Heart right ventricle (tissue), 16 donors: ENCODE measurements at regions of chr10 and their contacts with region 1.

Region 1: GRCh38 chr10:102583435-102584417 is 60.6 kb upstream of the TRIM8 start:
- DNase-seq: peak; percentile 79 to 86
- ATAC-seq: peak; percentile 86 to 94 (median 91)
- H3K4me3 ChIP-seq: no peak overlapping the region
- H3K27ac ChIP-seq: no peak overlapping the region
- H3K4me1 ChIP-seq: peaks cover 0 to 42% (median 23%) of the 10 kb centered on the region in 9 donors
- H3K27me3 ChIP-seq: no peaks in the 10 kb centered on the region
- CTCF ChIP-seq: peak; percentile 70 to 92 (median 85)

Region 2: DNA sequence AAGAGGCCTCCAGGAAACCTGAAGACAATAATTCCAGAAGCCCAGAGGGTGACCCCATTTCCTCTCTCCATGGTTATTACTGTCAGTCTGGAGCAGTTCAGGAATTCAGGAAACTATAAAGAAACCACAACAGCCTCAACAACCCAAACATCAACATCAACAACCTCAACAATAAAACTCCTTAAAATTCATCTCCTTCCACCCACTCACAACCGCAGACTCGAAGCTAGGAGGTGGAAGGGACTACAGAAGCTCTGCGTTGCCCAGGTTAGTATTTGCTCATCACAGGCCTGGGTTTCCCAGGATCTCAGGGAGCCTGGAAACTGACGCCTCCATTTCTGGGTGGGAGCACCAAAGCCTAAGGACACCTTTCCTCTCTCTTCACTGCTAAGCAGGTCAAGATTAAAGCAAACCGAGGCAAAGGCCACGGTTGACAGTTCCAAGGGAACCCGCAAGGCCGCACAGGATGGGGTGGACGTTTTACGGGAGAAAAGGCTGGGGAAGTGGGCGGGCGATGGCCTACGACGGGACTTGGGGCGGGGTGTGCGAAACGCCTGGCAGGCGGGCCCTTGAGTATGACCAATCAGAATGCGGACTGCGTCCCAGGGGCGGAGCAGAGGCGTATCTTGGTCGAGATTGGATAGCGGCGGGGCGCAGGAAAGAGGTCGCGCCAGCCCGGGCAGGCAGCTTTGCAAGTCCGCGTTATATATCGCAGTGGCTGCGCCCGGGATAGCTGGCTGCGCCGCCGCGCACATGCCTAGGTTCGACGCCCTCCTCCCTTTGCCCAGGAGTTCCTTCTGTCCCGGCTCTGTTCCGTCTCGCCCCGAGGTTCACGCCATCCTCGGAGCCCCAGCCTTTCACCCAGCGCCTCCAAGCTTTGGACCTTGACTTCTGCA is 357.8 kb before region 1 on chr10 and contains the start of gene ELOVL3:
- intact Hi-C with region 1: loop called in 1 of 10 experiments (anchors 10 kb)
- DNase-seq: peak; percentile 93 to 96
- ATAC-seq: peak; percentile 93 to 98 (median 98)
- H3K4me3 ChIP-seq: peak within 1 kb of the TSS in 7 of 10 donors; percentile 18 to 49 (median 45)
- H3K27ac ChIP-seq: peak within 1 kb of the TSS; percentile 19 to 89 (median 74)
- H3K4me1 ChIP-seq: peaks cover 6 to 44% (median 23%) of the 10 kb centered on the region in 9 donors
- H3K27me3 ChIP-seq: peaks cover 0 to 27% (median 10%) of the 10 kb centered on the region in 7 donors
- CTCF ChIP-seq: peak in 3 of 9 donors; percentile 1 to 10 (median 5)
- total RNA-seq, gene ELOVL3: 0.22 to 0.45 (median 0.30) TPM in 3 of 10 donors, not detected in the others

Region 3: GRCh38 chr10:102394079-102394800 is 189.5 kb before region 1 on chr10:
- intact Hi-C with region 1: loop called in 8 of 10 experiments (anchors 2 to 10 kb)
- DNase-seq: peak; percentile 95 to 97
- ATAC-seq: peak; percentile 91 to 94 (median 92)
- H3K4me3 ChIP-seq: peak overlapping the region; percentile 48 to 90 (median 69)
- H3K27ac ChIP-seq: peak overlapping the region; percentile 91 to 98 (median 96)
- H3K4me1 ChIP-seq: peaks cover 4 to 48% (median 25%) of the 10 kb centered on the region in 9 donors
- H3K27me3 ChIP-seq: no peaks in the 10 kb centered on the region
- CTCF ChIP-seq: peak in 6 of 9 donors; percentile 46 to 99 (median 98)

Region 4: DNA sequence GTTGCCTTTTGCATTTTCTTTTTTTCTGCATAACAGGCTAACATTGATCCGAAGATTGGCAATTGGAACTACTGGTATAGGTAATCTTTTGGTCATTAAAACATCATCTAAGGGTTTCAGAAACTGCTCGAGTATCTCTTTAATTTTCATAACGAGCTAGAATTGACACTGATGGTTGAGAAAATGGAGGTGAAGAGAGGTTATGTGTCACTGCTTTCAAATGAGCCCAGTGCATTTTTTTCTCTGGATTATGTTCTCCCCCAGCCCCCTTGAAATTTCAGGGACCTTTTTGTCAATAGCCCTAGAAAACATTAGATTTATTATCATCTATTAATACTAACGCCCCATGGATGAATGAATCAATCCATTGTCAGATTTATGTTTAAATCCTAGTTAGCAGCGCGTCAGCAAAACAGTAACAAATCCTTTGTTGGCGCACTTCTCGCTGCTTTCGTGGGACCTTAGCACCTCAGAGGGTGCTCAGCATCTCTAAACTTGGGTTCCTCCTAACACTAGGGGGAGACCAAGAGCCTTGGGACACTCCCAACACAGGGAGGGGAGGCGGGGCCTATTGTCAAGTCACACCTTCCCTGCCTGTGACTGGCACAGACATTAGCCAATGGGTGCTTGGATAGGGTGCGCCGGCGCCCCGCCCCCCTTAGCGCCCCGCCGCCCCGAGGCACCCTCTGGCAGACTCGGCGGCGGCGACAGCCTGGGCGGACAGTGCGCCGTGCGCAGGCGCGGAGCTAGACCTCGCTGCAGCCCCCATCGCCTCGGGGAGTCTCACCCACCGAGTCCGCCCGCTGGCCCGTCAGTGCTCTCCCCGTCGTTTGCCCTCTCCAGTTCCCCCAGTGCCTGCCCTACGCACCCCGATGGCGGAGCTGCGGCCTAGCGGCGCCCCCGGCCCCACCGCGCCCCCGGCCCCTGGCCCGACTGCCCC is 80.2 kb before region 1 on chr10 and contains the start of gene SUFU:
- intact Hi-C with region 1: loop called (anchors 1 to 5 kb)
- DNase-seq: peak; percentile 96 to 99
- ATAC-seq: peak; percentile 80 to 90 (median 84)
- H3K4me3 ChIP-seq: peak within 1 kb of the TSS; percentile 66 to 99 (median 88)
- H3K27ac ChIP-seq: peak within 1 kb of the TSS in 9 of 10 donors; percentile 79 to 96 (median 94)
- H3K4me1 ChIP-seq: peaks cover 11 to 69% (median 47%) of the 10 kb centered on the region in 9 donors
- H3K27me3 ChIP-seq: no peaks in the 10 kb centered on the region
- CTCF ChIP-seq: peak; percentile 89 to 99 (median 94)
- total RNA-seq, gene SUFU: 5.7 to 10.1 (median 7.5) TPM

Region 5: GRCh38 chr10:102555781-102556328 is 27.9 kb before region 1 on chr10:
- intact Hi-C with region 1: no loop called
- DNase-seq: no peak
- ATAC-seq: peak in 7 of 8 donors; percentile 58 to 85 (median 65)
- H3K4me3 ChIP-seq: no peak overlapping the region
- H3K27ac ChIP-seq: no peak overlapping the region
- H3K4me1 ChIP-seq: peaks cover 0 to 25% (median 3%) of the 10 kb centered on the region in 9 donors
- H3K27me3 ChIP-seq: no peaks in the 10 kb centered on the region
- CTCF ChIP-seq: no peak